Activated T-helper 1 cell treated with anti-CD3 and anti-CD28 coated beads, Interleukin-12 subunit alpha, Interleukin-12 subunit beta, Interleukin-2, Interleukin-4 antibody, amounts not matched to agents 30 ng/mL and 10 ng/mL and 1 ng/mL, durations not matched to agents 14 hours and 24 hours and 36 hours (primary cell): ENCODE measurements at regions of chr10 and their contacts with region 1.

Region 1: GRCh38 chr10:110408203-110408751 is 89.4 kb upstream of the DUSP5 start:
- DNase-seq: no peak
- H3K4me3 Mint-ChIP-seq: no peak overlapping the region
- H3K27ac Mint-ChIP-seq: peak overlapping the region; percentile 72
- H3K4me1 Mint-ChIP-seq: peaks cover 77% of the 10 kb centered on the region
- H3K27me3 Mint-ChIP-seq: peaks cover 8% of the 10 kb centered on the region

Region 2: GRCh38 chr10:110395725-110396651 is 12.3 kb before region 1 on chr10:
- intact Hi-C with region 1: loop called (anchors 1 kb)
- DNase-seq: peak; percentile 67
- H3K4me3 Mint-ChIP-seq: peak overlapping the region; percentile 15
- H3K27ac Mint-ChIP-seq: peak overlapping the region; percentile 77
- H3K4me1 Mint-ChIP-seq: peaks cover 75% of the 10 kb centered on the region
- H3K27me3 Mint-ChIP-seq: no peaks in the 10 kb centered on the region